A673 (cell line): ENCODE measurements at regions of chr1 and their contacts with region 1.

Region 1: GRCh38 chr1:119743781-119744597 is 24.7 kb downstream of the HMGCS2 start:
- DNase-seq: peak; percentile 87
- H3K4me3 ChIP-seq: no peak overlapping the region
- H3K27ac ChIP-seq: no peak overlapping the region
- H3K4me1 ChIP-seq: no peaks in the 10 kb centered on the region
- H3K27me3 ChIP-seq: no peaks in the 10 kb centered on the region
- CTCF ChIP-seq: peak; percentile 88

Region 2: GRCh38 chr1:119008483-119009311 is 735.3 kb before region 1 on chr1:
- CTCF ChIA-PET with region 1: no interaction called
- POLR2A ChIA-PET with region 1: no interaction called
- intact Hi-C with region 1: no loop called
- DNase-seq: peak; percentile 71
- H3K4me3 ChIP-seq: peak overlapping the region; percentile 14
- H3K27ac ChIP-seq: no peak overlapping the region
- H3K4me1 ChIP-seq: no peaks in the 10 kb centered on the region
- H3K27me3 ChIP-seq: peaks cover 36% of the 10 kb centered on the region
- CTCF ChIP-seq: peak; percentile 70

Region 3: GRCh38 chr1:119312496-119312895 is 431.5 kb before region 1 on chr1:
- CTCF ChIA-PET with region 1: no interaction called
- POLR2A ChIA-PET with region 1: no interaction called
- intact Hi-C with region 1: no loop called
- DNase-seq: no peak
- H3K4me3 ChIP-seq: no peak overlapping the region
- H3K27ac ChIP-seq: no peak overlapping the region
- H3K4me1 ChIP-seq: no peaks in the 10 kb centered on the region
- H3K27me3 ChIP-seq: no peaks in the 10 kb centered on the region
- CTCF ChIP-seq: no peak

Region 4: DNA sequence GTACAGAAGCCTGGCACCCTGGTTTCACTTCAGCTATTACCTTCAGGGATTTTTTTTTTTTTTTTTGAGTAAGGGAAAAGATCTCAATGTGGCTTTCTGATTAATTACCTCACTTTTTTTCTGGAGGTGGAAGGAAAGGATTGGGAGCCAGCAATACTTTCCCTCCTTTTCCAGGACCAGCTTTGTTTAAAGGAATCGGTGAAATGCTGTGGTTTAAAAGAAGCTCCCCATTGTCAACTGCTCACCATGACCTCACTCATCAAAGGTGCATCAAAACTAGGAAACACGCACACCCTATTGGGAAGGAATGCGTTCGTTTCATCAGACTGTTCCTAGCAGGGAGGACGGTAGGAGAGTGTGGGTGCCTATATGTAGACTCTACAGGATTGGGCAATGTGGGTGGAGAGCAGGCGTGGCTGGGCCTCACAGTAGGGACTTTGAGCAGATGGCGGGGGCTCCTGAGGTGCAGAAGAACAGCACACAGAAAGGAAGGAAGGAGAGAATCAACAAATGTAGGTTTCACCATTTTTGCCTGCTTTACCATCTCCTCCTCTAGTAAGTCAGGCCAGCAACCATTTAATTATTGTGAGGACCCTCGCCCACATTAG is 19.3 kb before region 1 on chr1:
- CTCF ChIA-PET with region 1: no interaction called
- POLR2A ChIA-PET with region 1: interaction called, 18 read pairs
- intact Hi-C with region 1: no loop called
- DNase-seq: no peak
- H3K4me3 ChIP-seq: no peak overlapping the region
- H3K27ac ChIP-seq: no peak overlapping the region
- H3K4me1 ChIP-seq: peaks cover 4% of the 10 kb centered on the region
- H3K27me3 ChIP-seq: no peaks in the 10 kb centered on the region
- CTCF ChIP-seq: no peak

Region 5: GRCh38 chr1:119808972-119809550 is 65.1 kb after region 1 on chr1:
- CTCF ChIA-PET with region 1: no interaction called
- POLR2A ChIA-PET with region 1: no interaction called
- intact Hi-C with region 1: loop called (anchors 5 kb)
- DNase-seq: peak; percentile 71
- H3K4me3 ChIP-seq: no peak overlapping the region
- H3K27ac ChIP-seq: no peak overlapping the region
- H3K4me1 ChIP-seq: no peaks in the 10 kb centered on the region
- H3K27me3 ChIP-seq: no peaks in the 10 kb centered on the region
- CTCF ChIP-seq: peak; percentile 98

Region 6: DNA sequence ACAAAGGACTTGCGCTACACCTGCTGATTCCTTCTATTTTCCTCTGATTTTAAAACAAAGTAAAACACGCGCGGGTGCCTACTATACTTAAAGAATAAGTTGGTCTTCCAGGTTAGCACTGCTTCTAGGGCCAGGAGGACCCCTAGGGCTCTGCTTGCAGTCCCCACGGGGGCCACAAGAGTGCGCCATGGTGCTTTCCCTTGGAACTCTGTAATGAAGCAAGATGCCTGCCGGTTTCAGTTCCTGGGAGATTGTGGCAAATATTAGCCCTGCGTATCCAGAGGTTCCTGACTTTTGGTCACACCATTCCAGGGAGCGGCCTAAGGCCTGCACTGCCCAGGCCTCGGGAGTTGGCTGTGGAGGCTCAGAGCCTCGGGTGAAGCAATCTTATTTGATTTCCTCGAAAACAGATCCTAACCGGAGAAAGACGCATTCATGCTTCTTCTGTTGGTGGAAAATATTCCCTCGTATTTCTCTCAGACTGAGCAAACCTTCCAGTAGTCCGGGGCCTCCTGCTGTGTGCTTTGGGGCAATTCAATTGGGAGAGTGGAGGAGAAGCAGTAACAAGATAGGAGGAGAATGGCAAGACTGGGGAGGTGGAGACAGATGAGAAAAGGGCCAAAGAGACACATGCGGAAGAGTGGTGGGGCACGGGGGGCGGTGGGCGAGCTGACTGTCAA is 127.1 kb after region 1 on chr1:
- CTCF ChIA-PET with region 1: no interaction called
- POLR2A ChIA-PET with region 1: no interaction called
- intact Hi-C with region 1: loop called (anchors 5 kb)
- DNase-seq: peak; percentile 88
- H3K4me3 ChIP-seq: peak overlapping the region; percentile 26
- H3K27ac ChIP-seq: peak overlapping the region; percentile 10
- H3K4me1 ChIP-seq: no peaks in the 10 kb centered on the region
- H3K27me3 ChIP-seq: no peaks in the 10 kb centered on the region
- CTCF ChIP-seq: peak; percentile 97